ENCODE measurements at regions of chr5 and their contacts with region 1.

Region 1: DNA sequence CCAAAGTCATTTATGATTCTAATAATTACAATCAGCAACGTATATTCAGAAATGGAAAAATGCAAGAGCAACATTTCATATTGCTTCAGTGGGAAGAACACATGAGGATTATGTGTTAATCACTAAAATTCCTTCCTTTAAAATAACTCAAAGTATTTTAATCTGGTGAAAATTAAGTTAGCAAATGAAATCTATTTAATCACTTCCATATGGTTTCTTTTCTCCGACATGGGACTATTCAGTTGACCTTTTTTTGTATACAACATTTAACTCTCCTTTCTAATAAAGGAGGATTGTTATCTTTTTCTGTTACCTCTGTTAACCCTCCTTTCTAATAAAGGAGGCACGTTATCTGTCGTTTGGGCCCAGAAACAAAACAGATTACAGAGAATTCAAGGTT is 59.9 kb downstream of the HOMER1 start:
- DNase-seq: no peak
- ATAC-seq: no peak
- H3K4me3 ChIP-seq: no peak overlapping the region
- H3K27ac ChIP-seq: no peak overlapping the region
- H3K4me1 ChIP-seq: no peaks in the 10 kb centered on the region; the same call in 1 of the 2 replicates
- H3K27me3 ChIP-seq: no peaks in the 10 kb centered on the region
- CTCF ChIP-seq: no peak
- POLR2A ChIP-seq: no peak
- RAD21 ChIP-seq: no peak

Region 2: GRCh38 chr5:78424665-78425064 is 1029.4 kb before region 1 on chr5:
- CTCF ChIA-PET with region 1: no interaction called
- POLR2A ChIA-PET with region 1: no interaction called
- dilution Hi-C with region 1: no loop called
- in situ Hi-C with region 1: no loop called
- intact Hi-C with region 1: loop called (anchors 5 kb)
- DNase-seq: no peak
- ATAC-seq: no peak
- H3K4me3 ChIP-seq: no peak overlapping the region
- H3K27ac ChIP-seq: no peak overlapping the region
- H3K4me1 ChIP-seq: no peaks in the 10 kb centered on the region
- H3K27me3 ChIP-seq: no peaks in the 10 kb centered on the region
- CTCF ChIP-seq: no peak
- POLR2A ChIP-seq: no peak
- RAD21 ChIP-seq: no peak

Region 3: DNA sequence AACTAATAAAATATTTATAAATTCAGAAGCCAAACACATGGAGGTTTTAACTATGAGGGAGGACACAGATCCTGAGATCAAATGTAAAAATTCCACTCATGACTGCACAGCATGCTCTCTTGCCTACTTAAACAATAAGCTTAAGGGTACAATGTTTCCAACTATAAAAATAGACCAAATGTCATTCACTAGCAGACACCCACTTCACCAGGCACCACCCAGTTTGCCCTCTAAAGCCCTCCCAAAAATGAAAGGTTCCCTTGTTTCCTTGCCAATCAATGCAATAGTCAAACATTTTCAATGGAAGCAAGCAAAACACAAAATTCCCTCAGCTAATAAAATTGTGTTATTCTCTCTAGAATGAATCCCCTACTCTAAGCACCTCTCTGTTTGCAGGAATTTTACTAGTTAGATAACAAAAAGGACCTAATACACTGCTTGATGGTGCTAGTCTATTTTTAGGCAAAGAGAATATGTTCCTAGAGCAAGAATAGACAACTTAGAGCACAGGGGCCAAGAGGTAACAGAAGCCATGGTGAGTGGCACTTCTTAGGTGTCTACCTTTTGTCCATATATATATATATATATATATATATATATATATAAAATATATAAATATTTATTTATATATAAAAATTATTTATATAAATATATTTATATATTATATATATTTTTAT is 75.4 kb before region 1 on chr5:
- CTCF ChIA-PET with region 1: no interaction called
- POLR2A ChIA-PET with region 1: no interaction called
- dilution Hi-C with region 1: no loop called
- in situ Hi-C with region 1: no loop called
- intact Hi-C with region 1: no loop called
- DNase-seq: no peak
- ATAC-seq: no peak
- H3K4me3 ChIP-seq: no peak overlapping the region
- H3K27ac ChIP-seq: no peak overlapping the region
- H3K4me1 ChIP-seq: no peaks in the 10 kb centered on the region
- H3K27me3 ChIP-seq: no peaks in the 10 kb centered on the region
- CTCF ChIP-seq: no peak
- POLR2A ChIP-seq: no peak
- RAD21 ChIP-seq: no peak